ENCODE measurements at regions of chrX and their contacts with region 1.

Region 1: DNA sequence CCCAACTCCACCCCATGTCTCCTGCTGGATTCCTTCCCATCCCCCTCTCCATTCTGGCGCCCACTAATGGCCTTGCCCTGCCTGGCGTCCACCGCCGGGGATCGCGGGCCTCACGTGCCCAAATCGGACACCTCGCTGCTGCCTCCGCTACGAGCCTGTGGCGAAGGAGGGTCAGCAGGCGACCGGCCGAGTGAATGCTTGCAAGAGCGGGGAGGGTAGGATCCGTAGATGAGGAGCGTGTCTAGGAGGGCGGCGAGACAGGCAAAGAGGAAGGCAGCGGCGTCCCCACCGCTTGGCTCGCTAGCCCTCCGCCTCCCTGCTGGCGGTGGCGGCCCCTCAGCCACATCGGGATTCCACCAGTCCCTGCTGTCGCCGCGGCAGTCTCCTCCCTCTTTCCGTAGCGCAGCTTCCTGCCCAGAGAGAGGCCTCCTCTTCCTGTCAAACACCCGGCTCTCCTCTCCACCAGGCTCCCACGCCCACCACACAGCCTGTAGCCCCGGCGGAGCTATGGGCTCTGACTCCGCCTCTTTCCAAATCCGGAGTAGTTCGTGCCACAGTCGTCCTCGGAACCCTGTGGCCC is at the start of gene SPIN2B:
- DNase-seq: peak; percentile 74
- H3K4me3 Mint-ChIP-seq: peak within 1 kb of the TSS; percentile 77
- H3K27ac Mint-ChIP-seq: peak within 1 kb of the TSS; percentile 57
- H3K4me1 Mint-ChIP-seq: no peaks in the 10 kb centered on the region
- H3K27me3 Mint-ChIP-seq: peaks cover 19% of the 10 kb centered on the region
- CTCF ChIP-seq: no peak
- total RNA-seq, gene SPIN2B: 7.2 and 9.5 TPM in 2 replicates

Region 2: DNA sequence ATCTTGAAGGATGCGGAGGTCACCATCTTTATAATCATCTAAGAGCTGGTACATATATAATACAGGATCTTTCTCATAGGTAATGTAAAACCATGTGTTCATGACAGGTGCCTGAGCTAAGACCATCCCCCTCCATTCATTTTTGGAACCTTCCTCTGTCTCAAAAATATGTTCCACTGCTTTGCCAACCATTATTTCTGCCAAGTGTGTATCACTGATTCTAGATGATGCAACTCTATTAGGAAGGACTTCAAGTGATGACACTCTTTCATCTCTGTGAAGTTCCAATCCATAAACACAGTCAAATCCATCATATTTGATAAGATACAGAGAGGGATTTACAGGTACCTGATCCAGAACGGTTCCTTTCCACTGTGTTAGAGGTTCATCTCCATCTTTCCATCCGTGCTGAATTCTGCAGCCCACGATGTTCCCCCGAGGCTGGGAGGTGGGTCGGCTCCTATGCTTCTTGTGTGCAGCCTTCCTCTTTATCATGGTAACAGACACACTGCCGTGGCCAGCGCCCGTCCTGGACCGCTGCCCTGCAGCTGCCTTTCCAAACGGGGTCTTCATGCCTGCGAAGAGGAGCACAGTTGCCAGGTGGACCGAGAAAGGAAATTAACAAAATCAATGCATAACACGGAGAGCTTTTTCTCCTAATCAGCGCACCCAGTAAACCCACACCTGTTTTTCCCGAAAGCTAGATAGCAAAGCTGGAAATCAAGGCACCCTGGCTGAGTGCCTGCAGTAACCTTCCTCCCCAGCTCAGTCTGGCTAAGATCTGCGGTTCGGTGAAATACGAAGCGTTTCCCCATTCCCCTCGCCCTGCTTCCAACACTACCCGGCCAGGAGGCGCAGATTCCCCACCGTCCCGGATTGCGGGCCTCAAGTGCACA is 126.6 kb before region 1 on chrX:
- CTCF ChIA-PET with region 1: no interaction called
- POLR2A ChIA-PET with region 1: interaction called, 3 read pairs
- intact Hi-C with region 1: loop called (anchors 5 kb)
- DNase-seq: no peak
- H3K4me3 Mint-ChIP-seq: peak overlapping the region; percentile 94
- H3K27ac Mint-ChIP-seq: peak overlapping the region; percentile 76
- H3K4me1 Mint-ChIP-seq: peaks cover 11% of the 10 kb centered on the region
- H3K27me3 Mint-ChIP-seq: peaks cover 49% of the 10 kb centered on the region
- CTCF ChIP-seq: no peak

Region 3: DNA sequence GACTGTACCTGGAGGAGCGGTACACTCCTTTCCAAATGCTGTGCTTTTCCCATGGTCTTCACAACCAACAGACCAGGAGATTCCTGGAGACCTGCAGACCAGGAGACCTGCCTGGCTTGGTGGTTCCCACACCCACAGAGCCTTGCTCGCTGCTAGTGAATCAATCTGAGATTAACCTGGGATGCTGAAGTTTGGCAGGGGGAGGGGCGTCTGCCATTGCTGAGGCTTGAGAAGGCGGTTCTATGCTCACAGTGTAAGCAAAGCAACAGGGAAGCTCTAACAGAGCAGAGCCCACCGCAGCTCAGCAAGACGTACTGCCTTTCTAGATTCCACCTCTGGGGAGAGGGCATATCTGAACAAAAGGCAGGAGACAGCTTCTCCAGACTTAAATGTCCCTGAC is 130.7 kb after region 1 on chrX:
- CTCF ChIA-PET with region 1: no interaction called
- POLR2A ChIA-PET with region 1: no interaction called
- intact Hi-C with region 1: no loop called
- DNase-seq: no peak
- H3K4me3 Mint-ChIP-seq: no peak overlapping the region
- H3K27ac Mint-ChIP-seq: no peak overlapping the region
- H3K4me1 Mint-ChIP-seq: no peaks in the 10 kb centered on the region
- H3K27me3 Mint-ChIP-seq: peaks cover 25% of the 10 kb centered on the region
- CTCF ChIP-seq: no peak